Pancreas (tissue), 10 donors: ENCODE measurements at regions of chr15 and their contacts with region 1.

Region 1: DNA sequence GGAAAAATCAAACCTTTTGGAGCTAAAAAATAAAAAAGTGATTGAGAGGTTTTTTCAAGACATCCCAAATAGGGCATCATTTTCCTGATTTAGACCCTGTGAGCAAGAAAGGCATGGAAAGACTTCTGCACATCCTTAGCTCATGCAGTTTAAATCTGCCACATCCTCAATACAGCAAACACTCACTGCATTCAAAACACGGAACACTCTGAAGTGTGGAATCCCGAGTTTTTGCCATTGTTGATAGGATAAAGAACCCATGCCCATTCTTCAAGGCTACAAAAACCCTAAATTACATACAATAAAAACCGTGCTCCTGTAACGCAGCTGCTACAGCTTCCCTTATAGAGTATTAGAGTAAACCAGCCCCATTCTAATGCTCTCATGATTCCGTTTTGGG is 346.8 kb downstream of the GABRG3 start:
- DNase-seq: no peak
- ATAC-seq: no peak
- H3K4me3 ChIP-seq: no peak overlapping the region
- H3K27ac ChIP-seq: no peak overlapping the region
- H3K4me1 ChIP-seq: no peaks in the 10 kb centered on the region
- H3K27me3 ChIP-seq: no peaks in the 10 kb centered on the region
- CTCF ChIP-seq: no peak

Region 2: GRCh38 chr15:27268923-27269322 is 48.8 kb before region 1 on chr15:
- intact Hi-C with region 1: loop called in 1 of 3 experiments (anchors 5 kb)
- DNase-seq: no peak
- ATAC-seq: no peak
- H3K4me3 ChIP-seq: no peak overlapping the region
- H3K27ac ChIP-seq: no peak overlapping the region
- H3K4me1 ChIP-seq: no peaks in the 10 kb centered on the region
- H3K27me3 ChIP-seq: no peaks in the 10 kb centered on the region
- CTCF ChIP-seq: no peak